ENCODE measurements at regions of chr18 and their contacts with region 1.

Region 1: DNA sequence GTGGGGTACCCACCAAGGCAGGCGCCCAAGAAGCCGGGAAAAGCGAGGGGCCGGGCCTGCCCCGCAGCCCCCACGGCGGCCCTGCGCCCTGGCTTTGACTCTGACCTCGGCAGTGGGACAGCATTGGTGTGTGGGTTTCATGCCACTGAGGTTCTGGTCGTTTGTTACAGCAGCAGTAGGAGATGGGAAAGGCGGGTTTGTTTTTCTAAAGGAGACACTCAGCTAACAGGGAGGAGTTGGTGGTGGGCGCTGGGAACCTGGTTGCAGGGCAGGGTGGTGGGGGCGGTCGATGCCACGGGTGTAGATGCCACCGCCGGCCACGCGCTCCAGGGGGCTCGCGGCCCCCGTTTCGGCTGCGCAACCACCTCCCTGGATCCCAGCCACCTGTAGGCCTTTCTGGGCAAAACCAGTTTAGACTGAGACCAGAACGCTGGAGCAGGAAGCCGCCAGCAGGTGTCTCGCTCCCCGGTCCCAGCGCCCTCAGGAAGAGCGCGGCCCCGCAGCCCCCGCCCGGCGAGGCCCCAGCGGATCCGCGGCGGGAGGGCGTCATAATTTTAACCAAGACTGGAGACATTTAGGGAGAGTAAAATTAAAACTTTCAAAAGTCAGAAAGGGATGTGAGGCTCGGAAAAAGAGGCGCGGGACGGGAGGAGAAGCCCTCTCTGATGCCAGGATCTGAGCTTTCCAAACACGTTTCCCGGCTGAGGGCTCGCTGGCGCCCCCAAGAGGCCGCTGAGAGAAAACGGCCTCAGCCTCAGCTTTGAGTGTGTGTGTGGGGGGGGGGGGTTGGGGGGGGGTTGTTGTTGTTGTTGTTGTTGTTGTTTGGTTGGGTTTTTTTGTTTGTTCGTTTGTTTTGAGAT is 17.4 kb downstream of the CIDEA start:
- DNase-seq: peak; percentile 90
- H3K4me3 ChIP-seq: peak overlapping the region; percentile 42 to 77
- H3K27ac ChIP-seq: no peak overlapping the region
- H3K4me1 ChIP-seq: no peaks in the 10 kb centered on the region; a peak in 1 of 4 replicates
- H3K27me3 ChIP-seq: peaks cover 15% of the 10 kb centered on the region
- CTCF ChIP-seq: peak; percentile 70
- EP300 ChIP-seq: no peak
- RAD21 ChIP-seq: peak; percentile 13; the same call in 1 of the 2 replicates

Region 2: DNA sequence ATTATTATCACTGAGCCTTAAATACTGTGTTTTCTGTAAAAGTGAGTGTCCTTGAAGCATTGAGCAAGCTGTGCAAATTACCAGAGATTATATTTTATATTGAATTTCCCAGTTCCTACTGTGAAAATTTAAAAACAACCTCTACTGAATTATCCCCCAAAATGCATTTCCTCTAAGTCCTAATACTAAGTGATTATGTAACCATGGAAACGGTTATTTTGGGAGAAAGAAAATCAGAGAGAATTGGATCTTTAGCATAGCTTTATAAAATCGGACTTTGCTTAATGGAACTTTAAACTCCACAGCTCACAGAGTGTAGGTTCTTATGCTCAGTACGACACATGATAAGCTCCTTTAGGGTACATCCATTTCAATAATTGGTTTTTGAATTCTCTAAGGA is 439.7 kb before region 1 on chr18:
- CTCF ChIA-PET with region 1: no interaction called
- POLR2A ChIA-PET with region 1: no interaction called
- DNase-seq: no peak
- H3K4me3 ChIP-seq: no peak overlapping the region
- H3K27ac ChIP-seq: no peak overlapping the region
- H3K4me1 ChIP-seq: no peaks in the 10 kb centered on the region
- H3K27me3 ChIP-seq: peaks cover 24% of the 10 kb centered on the region; the same call in 1 of the 2 replicates
- CTCF ChIP-seq: no peak
- EP300 ChIP-seq: no peak
- RAD21 ChIP-seq: no peak

Region 3: DNA sequence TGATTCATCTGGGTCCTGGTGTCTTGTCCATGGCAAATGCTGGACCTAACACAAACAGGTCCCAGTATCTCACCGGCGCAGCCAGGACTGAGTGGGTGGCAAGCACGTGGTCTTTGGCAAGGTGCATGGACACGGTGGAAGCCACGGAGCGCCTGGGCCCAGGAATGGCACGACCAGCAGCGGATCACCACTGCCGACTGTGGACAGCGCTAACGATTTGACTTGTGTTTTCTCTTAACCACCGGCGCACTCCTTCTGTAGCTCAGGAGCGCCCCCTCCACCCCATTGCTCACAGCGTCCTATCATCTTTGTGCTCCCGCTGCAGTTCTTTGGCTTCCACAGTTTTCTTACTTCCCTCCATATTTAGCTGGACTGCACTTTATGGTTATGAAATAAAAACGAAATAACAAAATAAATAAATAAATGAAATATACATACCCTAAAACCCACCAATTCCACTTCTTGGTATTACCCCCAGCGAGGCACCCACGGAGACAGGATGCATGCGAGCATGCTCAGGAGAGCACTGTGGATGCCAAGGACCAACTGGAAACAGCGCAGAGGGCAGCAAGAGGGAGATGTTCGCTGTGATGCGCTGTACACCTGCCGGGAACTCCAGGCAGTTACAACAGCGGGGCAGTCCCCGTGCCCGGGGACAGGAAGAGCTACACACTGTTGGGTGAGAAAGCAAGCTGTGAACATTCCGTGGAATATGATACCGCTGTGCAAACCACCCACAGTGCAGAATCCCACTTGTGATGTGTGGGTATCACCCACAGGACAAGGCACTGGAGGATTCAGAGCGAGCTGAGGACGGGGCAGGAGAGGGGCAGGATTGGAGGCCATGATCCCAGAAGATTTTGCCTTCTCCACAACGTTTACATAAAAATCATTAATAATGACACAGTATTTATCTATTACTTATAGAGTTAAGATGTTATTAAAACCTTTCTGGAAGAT is 24.5 kb before region 1 on chr18:
- CTCF ChIA-PET with region 1: interaction called, 15 read pairs
- POLR2A ChIA-PET with region 1: no interaction called
- DNase-seq: peak; percentile 63
- H3K4me3 ChIP-seq: no peak overlapping the region
- H3K27ac ChIP-seq: no peak overlapping the region
- H3K4me1 ChIP-seq: peaks cover 0 to 2% of the 10 kb centered on the region in 2 experiments; a peak in 1 of 4 replicates
- H3K27me3 ChIP-seq: peaks cover 87% of the 10 kb centered on the region
- CTCF ChIP-seq: peak; percentile 46
- EP300 ChIP-seq: no peak
- RAD21 ChIP-seq: peak; percentile 36

Region 4: DNA sequence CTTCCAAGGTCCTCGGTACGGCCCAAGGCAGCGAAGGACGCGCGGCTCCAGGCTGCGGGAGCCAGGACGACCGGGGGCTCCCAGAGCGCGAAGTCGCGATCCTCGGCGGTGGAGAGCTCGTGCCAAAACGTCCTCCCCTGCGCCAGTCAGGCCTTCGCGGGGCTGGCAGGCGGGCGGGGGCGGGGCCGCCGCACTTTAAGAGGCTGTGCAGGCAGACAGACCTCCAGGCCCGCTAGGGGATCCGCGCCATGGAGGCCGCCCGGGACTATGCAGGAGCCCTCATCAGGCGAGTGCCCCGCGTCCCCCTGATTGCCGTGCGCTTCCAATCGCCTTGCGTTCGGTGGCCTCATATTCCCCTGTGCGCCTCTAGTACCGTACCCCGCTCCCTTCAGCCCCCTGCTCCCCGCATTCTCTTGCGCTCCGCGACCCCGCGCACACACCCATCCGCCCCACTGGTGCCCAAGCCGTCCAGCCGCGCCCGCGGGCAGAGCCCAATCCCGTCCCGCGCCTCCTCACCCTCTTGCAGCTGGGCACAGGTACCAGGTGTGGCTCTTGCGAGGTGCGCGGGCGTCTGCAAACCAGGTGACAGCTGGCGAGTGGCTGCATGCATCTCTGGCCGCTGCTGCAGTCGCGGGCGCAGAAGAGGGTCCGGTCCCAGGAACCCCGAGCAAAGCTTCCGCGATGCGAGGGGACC is 17.3 kb before region 1 on chr18 and contains the start of gene CIDEA:
- CTCF ChIA-PET with region 1: interaction called, 16 read pairs
- POLR2A ChIA-PET with region 1: no interaction called
- DNase-seq: no peak
- H3K4me3 ChIP-seq: no peak within 1 kb of the TSS
- H3K27ac ChIP-seq: no peak within 1 kb of the TSS
- H3K4me1 ChIP-seq: no peaks in the 10 kb centered on the region; a peak in 1 of 4 replicates
- H3K27me3 ChIP-seq: peaks cover 86% of the 10 kb centered on the region
- CTCF ChIP-seq: no peak
- EP300 ChIP-seq: no peak
- RAD21 ChIP-seq: no peak
- polyA plus RNA-seq, gene CIDEA: not detected in 2 replicates

Region 5: DNA sequence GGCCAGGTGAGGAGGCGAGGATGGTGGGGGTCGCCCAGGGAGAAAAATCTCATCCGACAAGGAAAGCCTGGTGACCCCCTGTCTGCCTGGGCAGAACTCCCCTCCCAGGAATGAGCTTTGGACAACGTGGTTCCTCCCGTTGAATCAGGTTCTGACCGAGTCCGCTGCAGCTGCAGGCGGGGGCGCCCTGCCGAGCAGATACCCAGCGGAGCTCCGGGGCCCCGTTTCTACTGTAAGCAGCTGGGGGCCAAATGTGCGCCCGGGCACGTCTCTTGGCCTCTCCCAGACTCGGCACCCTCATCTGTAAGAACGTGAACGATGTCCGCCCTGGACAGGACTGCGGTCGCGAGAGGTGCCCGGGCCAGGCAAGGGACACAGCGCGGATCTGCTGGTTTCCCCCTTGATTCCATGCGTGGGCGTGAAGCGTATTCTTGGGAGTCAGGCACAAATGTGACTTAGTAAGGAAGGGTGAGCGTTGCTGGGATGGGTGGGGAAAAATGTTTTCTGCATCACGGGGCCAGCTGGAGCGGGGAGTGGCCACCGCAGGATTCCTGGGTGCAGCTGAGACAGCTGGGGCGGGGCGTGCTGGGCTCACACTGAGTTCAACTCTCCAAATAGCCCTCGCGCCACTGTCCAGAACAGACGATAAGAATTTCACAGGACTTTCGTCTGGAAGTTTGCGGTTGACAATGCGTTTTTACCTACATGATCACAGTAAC is 16.2 kb after region 1 on chr18:
- CTCF ChIA-PET with region 1: interaction called, 50 read pairs
- POLR2A ChIA-PET with region 1: no interaction called
- DNase-seq: peak; percentile 55
- H3K4me3 ChIP-seq: peak overlapping the region; percentile 53 to 60
- H3K27ac ChIP-seq: 0 out of 4 replicates have a peak overlapping the region, but pooled peaks of 1 of the 2 experiments have one; percentile 24
- H3K4me1 ChIP-seq: peaks cover 6 to 15% of the 10 kb centered on the region in 2 experiments; a peak in 1 of 4 replicates
- H3K27me3 ChIP-seq: no peaks in the 10 kb centered on the region
- CTCF ChIP-seq: no peak
- EP300 ChIP-seq: no peak
- RAD21 ChIP-seq: no peak

Measured in SK-N-SH (cell line).